ENCODE measurements at regions of chr5 and their contacts with region 1.

Region 1: GRCh38 chr5:133996683-133997252 is 8.0 kb downstream of the VDAC1 start:
- DNase-seq: no peak
- ATAC-seq: no peak
- H3K4me3 Mint-ChIP-seq: no peak overlapping the region
- H3K27ac Mint-ChIP-seq: no peak overlapping the region
- H3K4me1 Mint-ChIP-seq: peaks cover 45% of the 10 kb centered on the region
- H3K27me3 Mint-ChIP-seq: no peaks in the 10 kb centered on the region

Region 2: GRCh38 chr5:133933670-133934295 is 63.0 kb before region 1 on chr5:
- CTCF ChIA-PET with region 1: no interaction called
- DNase-seq: no peak
- ATAC-seq: no peak
- H3K4me3 Mint-ChIP-seq: no peak overlapping the region
- H3K27ac Mint-ChIP-seq: no peak overlapping the region
- H3K4me1 Mint-ChIP-seq: peaks cover 19% of the 10 kb centered on the region
- H3K27me3 Mint-ChIP-seq: no peaks in the 10 kb centered on the region

Region 3: DNA sequence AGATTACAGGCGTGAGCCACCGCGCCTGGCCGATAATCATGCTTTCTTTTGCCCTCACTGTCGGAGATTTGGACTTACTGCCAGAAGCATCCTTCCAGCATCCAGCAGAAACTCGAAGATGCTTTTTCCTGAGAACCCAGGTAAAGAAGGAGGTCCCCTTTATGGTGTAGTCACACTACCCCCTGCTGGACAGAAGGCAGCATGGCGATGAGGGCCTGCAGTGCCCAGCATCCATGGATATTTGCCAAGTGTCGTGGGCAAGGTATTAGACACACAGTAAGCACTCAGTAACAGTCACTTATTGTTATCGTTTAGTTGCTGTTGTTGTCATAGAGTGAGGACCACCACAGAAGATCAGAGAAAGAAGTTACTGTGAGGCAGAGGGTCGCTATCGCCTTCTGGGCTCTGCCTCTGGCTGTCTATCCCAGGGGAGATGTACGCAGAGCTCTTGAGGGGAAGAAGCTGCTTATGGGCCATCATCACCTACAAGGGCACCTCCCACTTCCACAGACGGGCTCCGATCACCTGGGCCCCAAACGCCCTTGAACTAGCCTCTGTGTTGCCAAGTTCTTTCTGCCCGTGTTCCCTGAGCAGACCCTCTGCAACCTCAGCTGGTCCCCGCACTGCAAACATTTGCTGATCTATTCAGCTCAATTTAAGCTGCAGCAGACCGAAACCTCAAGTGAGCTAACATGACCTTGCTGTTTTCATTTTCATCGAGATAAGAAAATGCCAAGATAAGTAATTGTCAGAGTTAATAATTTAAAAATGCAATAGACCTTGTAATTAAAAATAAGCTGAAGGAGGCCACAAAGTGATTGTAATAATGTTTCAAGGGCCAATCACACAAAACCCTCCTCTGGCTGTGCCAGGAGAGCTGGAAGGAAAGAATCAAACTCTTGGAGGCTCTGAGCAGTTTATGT is 52.2 kb before region 1 on chr5:
- CTCF ChIA-PET with region 1: no interaction called
- DNase-seq: no peak
- ATAC-seq: no peak
- H3K4me3 Mint-ChIP-seq: no peak overlapping the region
- H3K27ac Mint-ChIP-seq: no peak overlapping the region
- H3K4me1 Mint-ChIP-seq: no peaks in the 10 kb centered on the region
- H3K27me3 Mint-ChIP-seq: peaks cover 3% of the 10 kb centered on the region

Region 4: DNA sequence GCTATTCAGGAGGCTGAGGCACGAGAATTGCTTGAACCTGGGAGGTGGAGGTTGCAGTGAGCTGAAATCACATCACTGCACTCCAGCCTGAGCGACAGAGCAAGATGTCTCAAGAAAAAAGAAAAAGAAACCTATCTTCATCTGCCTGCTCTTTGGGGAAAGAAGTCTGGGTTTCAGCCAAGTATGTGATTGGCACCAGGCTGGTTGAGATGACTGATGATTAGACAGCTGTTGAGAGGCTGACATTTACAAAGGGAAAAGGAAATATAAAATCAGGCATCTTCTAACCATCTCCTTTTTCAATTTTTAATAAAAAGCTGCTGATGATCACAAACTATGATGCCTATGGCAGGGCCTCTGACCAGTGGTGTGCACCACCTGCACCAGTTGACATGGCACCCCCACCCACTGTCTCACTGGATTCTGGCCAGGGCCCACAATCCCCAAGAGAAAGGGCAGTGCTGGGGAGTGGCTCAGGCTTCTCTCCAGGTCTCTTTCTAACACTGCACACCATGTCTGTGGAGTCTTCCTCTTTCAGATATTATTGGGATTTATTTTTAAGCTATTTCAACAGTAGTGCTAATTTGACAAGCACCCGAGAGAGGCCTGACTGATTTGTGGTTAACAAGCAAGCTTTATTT is 11.1 kb before region 1 on chr5:
- CTCF ChIA-PET with region 1: interaction called, 15 read pairs
- DNase-seq: no peak
- ATAC-seq: no peak
- H3K4me3 Mint-ChIP-seq: no peak overlapping the region
- H3K27ac Mint-ChIP-seq: peak overlapping the region; percentile 46
- H3K4me1 Mint-ChIP-seq: peaks cover 9% of the 10 kb centered on the region
- H3K27me3 Mint-ChIP-seq: no peaks in the 10 kb centered on the region

Measured in activated CD8-positive, alpha-beta memory T cell treated with anti-CD3 and anti-CD28 coated beads, Interleukin-2, amount 10 ng/mL, durations not matched to agents 7 days and 5 days (primary cell).